Naive thymus-derived CD4-positive, alpha-beta T cell (primary cell): ENCODE measurements at regions of chr17 and their contacts with region 1.

Region 1: GRCh38 chr17:48024937-48025906 is 12.4 kb downstream of the COPZ2 start:
- DNase-seq: peak; percentile 91 to 97 (median 95)
- ATAC-seq: peak; percentile 98
- H3K4me3 ChIP-seq: peak overlapping the region; percentile 43
- H3K4me3 Mint-ChIP-seq: peak overlapping the region; percentile 83 to 92 (median 88)
- H3K27ac ChIP-seq: no peak overlapping the region
- H3K27ac Mint-ChIP-seq: peak overlapping the region in 8 of 9 donors; percentile 13 to 91 (median 73)
- H3K4me1 ChIP-seq: peaks cover 9 to 26% of the 10 kb centered on the region in 2 donors
- H3K4me1 Mint-ChIP-seq: peaks cover 23 to 46% (median 34%) of the 10 kb centered on the region in 7 donors
- H3K27me3 ChIP-seq: peaks cover 0 to 11% of the 10 kb centered on the region in 2 donors
- H3K27me3 Mint-ChIP-seq: peaks cover 28 to 50% (median 40%) of the 10 kb centered on the region in 5 donors

Region 2: DNA sequence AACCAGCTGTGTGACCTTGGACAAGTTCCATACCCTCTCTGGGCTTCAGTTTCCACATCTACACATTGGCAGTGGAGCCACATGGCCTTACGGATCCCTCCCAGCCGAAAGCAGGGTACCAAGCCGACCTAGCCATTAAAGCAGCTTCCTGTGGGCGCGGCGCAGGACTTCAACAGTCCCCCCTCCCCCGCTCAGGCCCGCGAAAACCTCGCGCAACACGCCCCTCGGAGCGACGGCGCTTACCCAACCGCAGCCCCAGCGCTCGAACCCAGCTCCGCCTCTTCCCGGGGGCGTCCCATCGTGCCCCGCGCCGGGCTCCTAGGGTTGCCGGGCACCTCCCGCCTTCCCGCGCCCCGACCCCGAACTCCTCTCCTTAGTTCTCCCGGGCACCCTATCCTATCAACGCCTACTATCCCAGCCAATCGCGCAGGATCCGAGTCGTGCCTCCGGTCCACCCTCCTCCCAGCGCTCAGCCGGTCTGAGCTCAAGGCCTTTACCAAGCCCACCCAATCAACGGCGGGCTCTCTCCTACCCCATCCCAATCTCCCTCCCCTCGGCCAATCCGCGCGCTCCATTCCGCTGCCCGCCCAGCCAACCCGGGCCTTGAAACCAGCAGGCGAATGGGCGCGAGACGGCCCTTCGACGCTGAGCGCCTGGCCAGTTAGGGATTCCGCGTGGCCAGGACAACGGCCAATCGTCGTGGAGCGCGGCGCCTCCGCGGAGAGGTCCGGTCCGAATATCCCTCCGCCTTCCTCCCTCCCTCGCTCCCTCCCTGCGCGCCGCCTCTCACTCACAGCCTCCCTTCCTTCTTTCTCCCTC is 375.9 kb before region 1 on chr17 and contains the start of gene KPNB1:
- CTCF ChIA-PET with region 1: no interaction called
- POLR2A ChIA-PET with region 1: no interaction called
- intact Hi-C with region 1: loop called in 1 of 2 experiments (anchors 1 kb)
- DNase-seq: peak; percentile 85 to 97 (median 97)
- ATAC-seq: peak; percentile 90
- H3K4me3 ChIP-seq: peak within 1 kb of the TSS; percentile 55
- H3K4me3 Mint-ChIP-seq: peak within 1 kb of the TSS; percentile 92 to 100 (median 99)
- H3K27ac ChIP-seq: peak within 1 kb of the TSS; percentile 80
- H3K27ac Mint-ChIP-seq: peak within 1 kb of the TSS; percentile 92 to 100 (median 98)
- H3K4me1 ChIP-seq: peaks cover 26 to 34% of the 10 kb centered on the region in 2 donors
- H3K4me1 Mint-ChIP-seq: peaks cover 40 to 67% (median 53%) of the 10 kb centered on the region in 7 donors
- H3K27me3 ChIP-seq: no peaks in the 10 kb centered on the region
- H3K27me3 Mint-ChIP-seq: no peaks in the 10 kb centered on the region
- total RNA-seq, gene KPNB1: 185 to 465 (median 255) TPM

Region 3: GRCh38 chr17:47862621-47863440 is 162.4 kb before region 1 on chr17:
- CTCF ChIA-PET with region 1: no interaction called
- POLR2A ChIA-PET with region 1: no interaction called
- intact Hi-C with region 1: no loop called
- DNase-seq: no peak
- ATAC-seq: no peak
- H3K4me3 ChIP-seq: no peak overlapping the region
- H3K4me3 Mint-ChIP-seq: no peak overlapping the region
- H3K27ac ChIP-seq: no peak overlapping the region
- H3K27ac Mint-ChIP-seq: no peak overlapping the region
- H3K4me1 ChIP-seq: no peaks in the 10 kb centered on the region
- H3K4me1 Mint-ChIP-seq: peaks cover 0 to 28% (median 16%) of the 10 kb centered on the region in 7 donors
- H3K27me3 ChIP-seq: no peaks in the 10 kb centered on the region
- H3K27me3 Mint-ChIP-seq: peaks cover 0 to 26% (median 7%) of the 10 kb centered on the region in 5 donors

Region 4: DNA sequence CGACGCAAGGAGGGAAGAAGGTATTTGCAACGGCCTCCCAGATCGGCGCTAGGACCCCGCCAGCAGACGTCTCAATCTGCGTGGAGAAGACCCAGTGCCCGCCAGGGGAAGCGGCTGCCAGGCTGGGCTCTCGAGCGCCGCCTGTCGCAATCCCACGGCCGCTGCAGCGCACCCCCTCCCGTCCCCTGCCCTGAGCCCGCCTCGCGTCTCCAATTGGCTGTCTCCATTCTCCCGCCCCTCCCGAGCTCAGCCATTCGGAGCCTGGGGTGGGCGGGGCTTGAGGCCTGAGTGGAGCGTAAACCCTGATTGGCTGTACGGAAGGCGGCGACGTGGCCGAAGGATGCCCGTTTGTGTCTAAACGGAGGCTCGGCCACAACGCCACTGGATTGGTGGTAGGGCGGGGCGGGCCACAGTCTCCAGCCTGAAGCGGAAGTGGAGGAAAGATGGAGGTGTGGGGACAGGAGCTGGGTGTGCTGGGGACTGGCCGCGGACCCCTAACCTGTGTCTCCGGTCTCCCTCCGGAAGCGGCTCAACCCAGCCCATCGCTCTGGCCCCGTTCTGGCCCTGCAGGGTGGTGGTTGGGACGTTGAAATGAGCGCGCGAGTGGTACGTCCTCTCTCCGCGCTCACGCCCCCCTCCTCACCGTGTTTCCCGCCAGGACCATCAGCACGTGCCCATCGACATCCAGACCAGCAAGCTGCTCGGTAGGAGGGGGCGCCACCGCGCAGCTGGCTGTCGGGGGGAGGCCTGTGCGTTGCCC is 54.3 kb before region 1 on chr17 and contains the start of gene CDK5RAP3:
- CTCF ChIA-PET with region 1: interaction called, 3 read pairs
- POLR2A ChIA-PET with region 1: no interaction called
- intact Hi-C with region 1: loop called (anchors 2 kb)
- DNase-seq: peak; percentile 93 to 99 (median 97)
- ATAC-seq: peak; percentile 100
- H3K4me3 ChIP-seq: peak within 1 kb of the TSS; percentile 96
- H3K4me3 Mint-ChIP-seq: peak within 1 kb of the TSS; percentile 95 to 100 (median 99)
- H3K27ac ChIP-seq: peak within 1 kb of the TSS; percentile 71
- H3K27ac Mint-ChIP-seq: peak within 1 kb of the TSS; percentile 83 to 96 (median 93)
- H3K4me1 ChIP-seq: peaks cover 6 to 12% of the 10 kb centered on the region in 2 donors
- H3K4me1 Mint-ChIP-seq: peaks cover 14 to 41% (median 26%) of the 10 kb centered on the region in 7 donors
- H3K27me3 ChIP-seq: no peaks in the 10 kb centered on the region
- H3K27me3 Mint-ChIP-seq: no peaks in the 10 kb centered on the region
- total RNA-seq, gene CDK5RAP3: 238 to 349 (median 276) TPM

Region 5: GRCh38 chr17:48047741-48048383 is 22.6 kb after region 1 on chr17 and contains the start of gene NFE2L1:
- CTCF ChIA-PET with region 1: interaction called, 6 read pairs
- POLR2A ChIA-PET with region 1: interaction called, 5 read pairs
- intact Hi-C with region 1: loop called (anchors 1 kb)
- DNase-seq: peak; percentile 86 to 99 (median 98)
- ATAC-seq: peak; percentile 98
- H3K4me3 ChIP-seq: peak within 1 kb of the TSS; percentile 78
- H3K4me3 Mint-ChIP-seq: peak within 1 kb of the TSS; percentile 79 to 100 (median 94)
- H3K27ac ChIP-seq: peak within 1 kb of the TSS; percentile 87
- H3K27ac Mint-ChIP-seq: peak within 1 kb of the TSS; percentile 92 to 99 (median 98)
- H3K4me1 ChIP-seq: peaks cover 18 to 19% of the 10 kb centered on the region in 2 donors
- H3K4me1 Mint-ChIP-seq: peaks cover 37 to 68% (median 61%) of the 10 kb centered on the region in 7 donors
- H3K27me3 ChIP-seq: no peaks in the 10 kb centered on the region
- H3K27me3 Mint-ChIP-seq: no peaks in the 10 kb centered on the region
- total RNA-seq, gene NFE2L1: 34.7 to 65.2 (median 49.2) TPM

Region 6: DNA sequence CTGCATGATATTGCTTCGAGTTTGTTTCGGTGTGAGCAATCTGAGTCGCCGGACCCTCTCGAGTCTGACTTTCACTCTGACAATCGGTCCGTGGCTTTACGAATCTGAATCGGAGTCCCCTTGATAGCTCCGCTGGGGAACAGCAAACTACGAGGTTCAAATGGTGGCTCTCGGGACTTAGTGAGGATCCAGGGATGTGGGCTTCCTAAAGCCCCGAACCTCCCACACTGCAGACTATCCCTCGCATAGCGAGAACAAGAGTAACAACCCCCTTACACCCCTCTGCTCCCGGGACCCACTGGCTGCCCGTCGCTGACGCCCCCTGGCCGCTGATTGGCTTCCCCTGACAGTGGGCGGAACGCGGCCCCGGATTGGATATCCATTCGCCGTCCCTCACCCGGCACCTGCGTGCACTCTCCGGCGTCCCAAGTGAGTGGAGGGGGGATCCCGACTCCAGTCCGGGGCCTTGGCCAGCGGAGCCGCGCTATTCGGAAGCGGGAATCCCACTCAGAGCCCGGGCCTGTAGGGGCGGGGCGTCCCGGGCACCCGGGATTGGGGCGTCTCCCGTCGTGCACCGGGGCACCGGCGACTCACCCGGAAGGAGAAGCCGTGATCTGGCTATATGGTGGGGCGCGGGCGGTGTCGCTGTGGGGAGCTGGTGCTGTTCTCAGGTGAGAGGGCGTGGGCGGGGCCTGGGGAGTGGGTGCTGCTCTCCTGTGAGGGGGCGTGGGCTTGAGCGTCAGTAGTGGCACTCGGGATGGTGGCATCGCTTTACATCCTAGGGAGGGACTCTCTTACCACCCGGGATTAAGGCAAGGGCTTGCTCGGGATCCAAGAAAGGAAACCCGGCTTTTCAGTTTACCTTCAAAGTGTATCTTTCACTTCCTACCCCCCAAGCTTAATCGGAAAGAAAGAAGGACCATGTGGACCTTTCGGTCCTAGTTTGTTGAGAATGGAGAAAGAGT is 82.2 kb after region 1 on chr17 and contains the start of gene SNX11:
- CTCF ChIA-PET with region 1: interaction called, 3 read pairs
- POLR2A ChIA-PET with region 1: interaction called, 6 read pairs
- intact Hi-C with region 1: loop called in 1 of 2 experiments (anchors 1 kb)
- DNase-seq: peak; percentile 85 to 97 (median 94)
- ATAC-seq: peak; percentile 96
- H3K4me3 ChIP-seq: peak within 1 kb of the TSS; percentile 97
- H3K4me3 Mint-ChIP-seq: peak within 1 kb of the TSS; percentile 92 to 99 (median 96)
- H3K27ac ChIP-seq: peak within 1 kb of the TSS; percentile 89
- H3K27ac Mint-ChIP-seq: peak within 1 kb of the TSS; percentile 89 to 96 (median 93)
- H3K4me1 ChIP-seq: peaks cover 19 to 20% of the 10 kb centered on the region in 2 donors
- H3K4me1 Mint-ChIP-seq: peaks cover 45 to 68% (median 62%) of the 10 kb centered on the region in 7 donors
- H3K27me3 ChIP-seq: no peaks in the 10 kb centered on the region
- H3K27me3 Mint-ChIP-seq: no peaks in the 10 kb centered on the region
- total RNA-seq, gene SNX11: 12.3 to 35.1 (median 16.7) TPM

Region 7: GRCh38 chr17:48593840-48594537 is 568.8 kb after region 1 on chr17:
- CTCF ChIA-PET with region 1: interaction called, 3 read pairs
- POLR2A ChIA-PET with region 1: no interaction called
- intact Hi-C with region 1: loop called (anchors 1 kb)
- DNase-seq: peak; percentile 67 to 89 (median 80)
- ATAC-seq: peak; percentile 83
- H3K4me3 ChIP-seq: peak overlapping the region; percentile 56
- H3K4me3 Mint-ChIP-seq: peak overlapping the region; percentile 75 to 88 (median 81)
- H3K27ac ChIP-seq: no peak overlapping the region
- H3K27ac Mint-ChIP-seq: peak overlapping the region in 1 of 9 donors; percentile 16
- H3K4me1 ChIP-seq: peaks cover 37 to 40% of the 10 kb centered on the region in 2 donors
- H3K4me1 Mint-ChIP-seq: peaks cover 34 to 70% (median 51%) of the 10 kb centered on the region in 7 donors
- H3K27me3 ChIP-seq: peaks cover 6 to 54% of the 10 kb centered on the region in 2 donors
- H3K27me3 Mint-ChIP-seq: peaks cover 89 to 97% (median 93%) of the 10 kb centered on the region in 5 donors

Region 8: GRCh38 chr17:48878918-48879898 is 854.0 kb after region 1 on chr17:
- CTCF ChIA-PET with region 1: no interaction called
- POLR2A ChIA-PET with region 1: no interaction called
- intact Hi-C with region 1: loop called (anchors 5 to 10 kb)
- DNase-seq: peak; percentile 21 to 77 (median 69)
- ATAC-seq: peak; percentile 97
- H3K4me3 ChIP-seq: no peak overlapping the region
- H3K4me3 Mint-ChIP-seq: no peak overlapping the region
- H3K27ac ChIP-seq: no peak overlapping the region
- H3K27ac Mint-ChIP-seq: no peak overlapping the region
- H3K4me1 ChIP-seq: no peaks in the 10 kb centered on the region
- H3K4me1 Mint-ChIP-seq: peaks cover 0 to 16% (median under 1%) of the 10 kb centered on the region in 7 donors
- H3K27me3 ChIP-seq: no peaks in the 10 kb centered on the region
- H3K27me3 Mint-ChIP-seq: peaks cover 0 to 4% (median 0%) of the 10 kb centered on the region in 5 donors